ENCODE measurements at regions of chr11 and their contacts with region 1.

Region 1: DNA sequence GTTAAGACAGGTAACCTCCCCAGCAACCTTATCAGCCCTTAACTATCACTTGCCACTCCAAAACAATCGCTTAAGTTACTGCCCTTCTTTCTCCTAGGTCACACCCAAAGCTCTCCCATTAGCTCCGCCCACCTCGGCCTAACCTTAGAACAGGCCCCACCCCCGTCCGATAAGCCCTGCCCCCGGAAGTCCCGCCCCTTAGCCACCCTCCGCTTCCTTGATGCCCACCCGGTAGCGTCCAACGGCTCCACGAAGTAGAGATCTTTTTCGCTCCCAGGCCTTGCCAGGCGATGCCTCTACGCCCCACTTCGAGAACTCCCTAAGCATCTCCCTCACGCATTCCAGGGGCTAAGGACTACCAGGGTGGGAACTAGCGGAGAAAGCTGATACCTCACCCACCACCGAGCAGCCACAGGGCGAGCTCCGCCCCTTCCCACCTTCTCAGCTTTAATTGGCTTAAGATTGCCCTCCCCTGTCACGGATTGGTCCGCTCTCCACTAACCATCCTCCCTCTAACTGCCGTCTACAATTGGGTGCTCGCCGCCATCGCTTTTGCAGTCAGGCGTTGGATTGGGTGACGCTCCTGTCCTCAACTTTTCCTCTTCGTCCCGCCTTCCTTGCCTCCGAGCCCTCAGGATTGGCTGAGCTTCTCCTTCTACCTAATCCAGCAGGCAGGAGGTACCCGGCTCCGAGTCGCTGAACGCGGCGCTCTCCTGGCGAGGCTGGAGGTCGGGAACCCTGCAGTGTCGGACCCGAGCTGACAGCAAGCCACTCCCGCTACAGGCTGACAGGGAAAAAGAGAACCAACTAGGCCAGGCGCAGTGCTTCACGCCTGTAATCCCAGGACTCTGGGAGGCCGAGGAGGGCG is at the start of gene ZBTB3:
- DNase-seq: peak; percentile 96
- CTCF ChIP-seq: no peak

Region 2: GRCh38 chr11:62771144-62772021 is 17.4 kb after region 1 on chr11 and contains the start of gene TAF6L:
- CTCF ChIA-PET with region 1: interaction called, 46 read pairs
- POLR2A ChIA-PET with region 1: interaction called, 9 read pairs
- DNase-seq: peak; percentile 93
- CTCF ChIP-seq: no peak